CD4-positive, alpha-beta memory T cell (primary cell): ENCODE measurements at regions of chr9 and their contacts with region 1.

Region 1: DNA sequence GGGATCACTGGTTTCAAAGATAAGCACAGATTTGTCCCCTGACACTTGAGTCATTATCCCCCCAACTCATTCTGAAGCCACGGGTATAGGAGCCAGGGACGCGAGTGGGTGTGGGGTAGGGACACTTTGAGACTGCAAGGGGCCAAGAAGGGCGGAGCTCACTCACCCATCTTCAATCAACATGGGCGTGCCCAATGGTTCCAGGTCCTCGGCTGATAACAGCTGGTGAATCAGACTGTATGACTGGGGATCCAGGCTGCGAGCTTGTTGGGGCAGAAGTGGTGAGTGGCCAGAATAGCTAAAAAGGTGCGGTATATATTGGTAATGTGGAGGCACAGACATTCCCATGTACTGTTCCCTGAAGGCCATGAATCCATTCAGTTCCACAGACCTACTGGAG is 30.7 kb upstream of the NR5A1 start:
- DNase-seq: no peak
- H3K4me3 ChIP-seq: no peak overlapping the region
- H3K4me3 Mint-ChIP-seq: no peak overlapping the region
- H3K27ac ChIP-seq: no peak overlapping the region
- H3K27ac Mint-ChIP-seq: peak overlapping the region in 1 of 7 donors; percentile 40
- H3K4me1 ChIP-seq: no peaks in the 10 kb centered on the region
- H3K4me1 Mint-ChIP-seq: peaks cover 0 to 2% (median 0%) of the 10 kb centered on the region in 4 donors
- H3K27me3 ChIP-seq: no peaks in the 10 kb centered on the region
- H3K27me3 Mint-ChIP-seq: peaks cover 9 to 10% of the 10 kb centered on the region in 2 donors

Region 2: DNA sequence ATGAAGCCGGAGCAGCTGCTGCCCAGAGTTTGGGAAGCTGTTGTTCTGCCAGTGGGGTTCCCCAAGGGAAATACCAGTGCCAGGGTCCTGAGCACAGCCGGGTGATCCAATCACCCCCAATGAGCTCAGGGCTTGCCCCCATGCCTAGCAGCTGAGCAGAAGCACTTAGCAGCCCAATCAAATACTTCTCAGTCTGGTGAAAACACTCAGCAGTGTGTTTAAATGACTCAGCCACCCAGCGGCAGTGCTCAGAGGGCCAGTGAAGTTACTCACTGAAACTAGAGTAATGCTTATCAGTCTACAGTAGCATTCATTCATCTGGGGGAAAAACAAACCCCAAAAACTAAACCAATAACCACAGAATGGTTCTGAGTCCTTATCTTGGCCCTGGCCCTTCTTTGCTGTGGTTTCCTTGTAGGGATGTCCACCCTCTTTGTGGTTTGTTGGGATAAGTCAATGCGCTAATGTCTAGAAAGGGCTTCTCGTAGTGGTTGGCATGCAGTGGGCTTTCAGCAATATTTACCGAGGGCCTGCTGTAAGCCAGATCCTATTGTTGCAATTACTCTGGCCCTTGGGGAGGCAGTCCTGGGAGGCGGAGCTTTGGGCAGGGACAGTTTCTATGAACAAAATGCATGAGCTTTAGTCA is 483.2 kb before region 1 on chr9:
- CTCF ChIA-PET with region 1: no interaction called
- POLR2A ChIA-PET with region 1: no interaction called
- intact Hi-C with region 1: no loop called
- DNase-seq: no peak
- H3K4me3 ChIP-seq: no peak overlapping the region
- H3K4me3 Mint-ChIP-seq: no peak overlapping the region
- H3K27ac ChIP-seq: no peak overlapping the region
- H3K27ac Mint-ChIP-seq: no peak overlapping the region
- H3K4me1 ChIP-seq: no peaks in the 10 kb centered on the region
- H3K4me1 Mint-ChIP-seq: no peaks in the 10 kb centered on the region
- H3K27me3 ChIP-seq: peaks cover 6% of the 10 kb centered on the region
- H3K27me3 Mint-ChIP-seq: peaks cover 28 to 31% of the 10 kb centered on the region in 2 donors

Region 3: DNA sequence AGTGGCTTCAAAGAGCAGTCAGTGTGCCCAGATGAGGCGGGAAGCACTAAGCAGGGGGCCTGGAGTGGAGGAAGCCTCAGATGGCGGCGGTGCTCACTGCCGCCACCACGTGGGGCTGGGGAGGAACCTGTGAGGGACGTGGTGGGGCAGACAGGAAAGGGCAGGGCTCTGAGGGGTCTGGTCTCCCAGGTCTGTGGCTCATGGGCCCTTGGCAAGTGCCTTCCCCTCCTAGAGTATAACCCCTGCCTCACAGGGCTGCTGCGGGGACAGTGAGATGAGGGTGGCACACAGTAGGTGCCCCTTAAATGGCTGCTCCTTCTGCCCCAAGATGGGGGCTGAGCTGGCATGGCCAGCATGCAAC is 57.3 kb before region 1 on chr9:
- CTCF ChIA-PET with region 1: no interaction called
- POLR2A ChIA-PET with region 1: no interaction called
- intact Hi-C with region 1: no loop called
- DNase-seq: no peak
- H3K4me3 ChIP-seq: no peak overlapping the region
- H3K4me3 Mint-ChIP-seq: no peak overlapping the region
- H3K27ac ChIP-seq: no peak overlapping the region
- H3K27ac Mint-ChIP-seq: no peak overlapping the region
- H3K4me1 ChIP-seq: no peaks in the 10 kb centered on the region
- H3K4me1 Mint-ChIP-seq: no peaks in the 10 kb centered on the region
- H3K27me3 ChIP-seq: no peaks in the 10 kb centered on the region
- H3K27me3 Mint-ChIP-seq: peaks cover 3 to 7% of the 10 kb centered on the region in 2 donors

Region 4: GRCh38 chr9:124527781-124528180 is 10.1 kb before region 1 on chr9:
- CTCF ChIA-PET with region 1: interaction called, 15 read pairs
- POLR2A ChIA-PET with region 1: no interaction called
- intact Hi-C with region 1: no loop called
- DNase-seq: no peak
- H3K4me3 ChIP-seq: no peak overlapping the region
- H3K4me3 Mint-ChIP-seq: no peak overlapping the region
- H3K27ac ChIP-seq: no peak overlapping the region
- H3K27ac Mint-ChIP-seq: no peak overlapping the region
- H3K4me1 ChIP-seq: no peaks in the 10 kb centered on the region
- H3K4me1 Mint-ChIP-seq: no peaks in the 10 kb centered on the region
- H3K27me3 ChIP-seq: no peaks in the 10 kb centered on the region
- H3K27me3 Mint-ChIP-seq: peaks cover 0 to 5% of the 10 kb centered on the region in 2 donors